Stomach (tissue), 19 donors: ENCODE measurements at regions of chr17 and their contacts with region 1.

Region 1: DNA sequence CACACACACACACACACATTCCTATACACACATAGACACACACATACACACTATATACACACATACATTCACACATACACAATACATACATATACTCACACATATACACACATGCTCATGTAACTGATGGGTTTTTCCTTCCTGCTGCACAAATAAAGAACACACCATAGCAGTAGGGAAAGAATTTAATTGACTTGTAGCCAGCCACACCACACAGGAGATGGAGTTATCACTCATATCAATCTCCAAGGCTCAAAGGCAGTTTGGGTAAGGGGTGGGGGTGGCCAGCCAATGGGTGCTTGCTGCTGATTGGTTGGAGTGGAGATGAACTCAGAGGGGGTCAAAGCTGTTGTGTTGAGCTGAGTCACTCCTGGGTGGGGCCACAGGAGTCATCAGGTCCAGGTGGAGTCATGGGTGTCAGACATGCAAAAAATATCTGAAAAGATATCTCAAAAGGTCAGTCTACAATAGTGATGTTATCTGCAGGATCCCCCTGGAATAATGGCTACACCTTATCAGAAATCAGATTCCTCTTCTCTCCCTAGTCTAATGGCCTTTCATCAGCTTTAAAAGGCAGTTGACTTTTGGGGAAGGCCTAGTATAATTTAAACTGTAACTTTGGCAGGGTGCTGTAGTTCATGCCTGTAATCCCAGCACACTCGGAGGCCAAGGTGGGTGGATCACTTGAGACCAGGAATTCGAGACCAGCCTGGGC is 46.1 kb downstream of the WSB1 start:
- DNase-seq: no peak
- H3K4me3 ChIP-seq: no peak overlapping the region
- H3K27ac ChIP-seq: no peak overlapping the region
- H3K4me1 ChIP-seq: peaks cover 0 to 27% (median 5%) of the 10 kb centered on the region in 4 donors
- H3K27me3 ChIP-seq: no peaks in the 10 kb centered on the region
- CTCF ChIP-seq: no peak
- EP300 ChIP-seq: no peak
- POLR2A ChIP-seq: no peak

Region 2: GRCh38 chr17:27396941-27397340 is 56.9 kb after region 1 on chr17:
- intact Hi-C with region 1: no loop called
- DNase-seq: peak in 1 of 2 donors; percentile 13
- H3K4me3 ChIP-seq: no peak overlapping the region
- H3K27ac ChIP-seq: no peak overlapping the region
- H3K4me1 ChIP-seq: no peaks in the 10 kb centered on the region
- H3K27me3 ChIP-seq: no peaks in the 10 kb centered on the region
- CTCF ChIP-seq: no peak
- EP300 ChIP-seq: no peak
- POLR2A ChIP-seq: no peak

Region 3: GRCh38 chr17:27415120-27415795 is 75.3 kb after region 1 on chr17:
- intact Hi-C with region 1: no loop called
- DNase-seq: no peak
- H3K4me3 ChIP-seq: no peak overlapping the region
- H3K27ac ChIP-seq: no peak overlapping the region
- H3K4me1 ChIP-seq: no peaks in the 10 kb centered on the region
- H3K27me3 ChIP-seq: no peaks in the 10 kb centered on the region
- CTCF ChIP-seq: no peak
- EP300 ChIP-seq: no peak
- POLR2A ChIP-seq: no peak

Region 4: DNA sequence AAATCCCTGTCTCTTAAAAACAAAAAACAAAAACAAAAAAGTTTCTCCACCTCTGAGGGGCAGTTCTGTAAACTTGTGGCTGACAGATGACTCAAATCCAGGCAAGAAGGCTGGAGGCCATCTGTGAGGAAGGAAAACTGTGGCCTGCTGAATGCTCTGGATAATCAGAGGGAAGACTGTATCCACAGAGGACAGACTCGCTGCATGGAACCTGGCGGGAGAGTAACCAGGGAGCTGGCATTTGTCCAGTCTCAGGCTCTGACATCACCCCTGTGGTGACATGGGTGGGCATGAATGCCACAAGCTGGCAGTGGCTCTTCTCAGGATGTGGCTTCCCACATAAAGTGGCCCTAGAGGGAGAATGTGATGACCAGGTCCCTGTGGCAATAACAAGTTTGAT is 113.5 kb after region 1 on chr17:
- intact Hi-C with region 1: loop called (anchors 5 kb)
- DNase-seq: no peak
- H3K4me3 ChIP-seq: no peak overlapping the region
- H3K27ac ChIP-seq: no peak overlapping the region
- H3K4me1 ChIP-seq: peaks cover 14 to 27% (median 25%) of the 10 kb centered on the region in 4 donors
- H3K27me3 ChIP-seq: no peaks in the 10 kb centered on the region
- CTCF ChIP-seq: no peak
- EP300 ChIP-seq: no peak
- POLR2A ChIP-seq: no peak